T-cell (primary cell): ENCODE measurements at regions of chr12 and their contacts with region 1.

Region 1: GRCh38 chr12:6833189-6833890 is 5.1 kb downstream of the P3H3 start:
- DNase-seq: no peak
- ATAC-seq: no peak
- H3K4me3 ChIP-seq: no peak overlapping the region
- H3K4me3 Mint-ChIP-seq: no peak overlapping the region
- H3K27ac ChIP-seq: no peak overlapping the region
- H3K27ac Mint-ChIP-seq: peak overlapping the region in 1 of 2 donors; percentile 16
- H3K4me1 ChIP-seq: peaks cover 0 to 17% of the 10 kb centered on the region in 2 experiments
- H3K4me1 Mint-ChIP-seq: peaks cover 9 to 16% (median 14%) of the 10 kb centered on the region in 3 donors
- H3K27me3 ChIP-seq: peaks cover 0 to 30% of the 10 kb centered on the region in 2 experiments
- H3K27me3 Mint-ChIP-seq: peaks cover 0 to 22% of the 10 kb centered on the region in 2 donors

Region 2: GRCh38 chr12:6582196-6582595 is 251.1 kb before region 1 on chr12:
- CTCF ChIA-PET with region 1: interaction called in 1 of 2 experiments, 13 read pairs
- POLR2A ChIA-PET with region 1: no interaction called
- DNase-seq: no peak
- ATAC-seq: peak in 1 of 4 experiments; percentile 17
- H3K4me3 ChIP-seq: no peak overlapping the region
- H3K4me3 Mint-ChIP-seq: no peak overlapping the region
- H3K27ac ChIP-seq: no peak overlapping the region
- H3K27ac Mint-ChIP-seq: no peak overlapping the region
- H3K4me1 ChIP-seq: no peaks in the 10 kb centered on the region
- H3K4me1 Mint-ChIP-seq: no peaks in the 10 kb centered on the region
- H3K27me3 ChIP-seq: no peaks in the 10 kb centered on the region
- H3K27me3 Mint-ChIP-seq: no peaks in the 10 kb centered on the region

Region 3: GRCh38 chr12:6884539-6884938 is 51.2 kb after region 1 on chr12:
- CTCF ChIA-PET with region 1: no interaction called
- POLR2A ChIA-PET with region 1: no interaction called
- DNase-seq: no peak
- ATAC-seq: no peak
- H3K4me3 ChIP-seq: no peak overlapping the region
- H3K4me3 Mint-ChIP-seq: no peak overlapping the region
- H3K27ac ChIP-seq: no peak overlapping the region
- H3K27ac Mint-ChIP-seq: no peak overlapping the region
- H3K4me1 ChIP-seq: no peaks in the 10 kb centered on the region
- H3K4me1 Mint-ChIP-seq: no peaks in the 10 kb centered on the region
- H3K27me3 ChIP-seq: no peaks in the 10 kb centered on the region
- H3K27me3 Mint-ChIP-seq: no peaks in the 10 kb centered on the region

Region 4: DNA sequence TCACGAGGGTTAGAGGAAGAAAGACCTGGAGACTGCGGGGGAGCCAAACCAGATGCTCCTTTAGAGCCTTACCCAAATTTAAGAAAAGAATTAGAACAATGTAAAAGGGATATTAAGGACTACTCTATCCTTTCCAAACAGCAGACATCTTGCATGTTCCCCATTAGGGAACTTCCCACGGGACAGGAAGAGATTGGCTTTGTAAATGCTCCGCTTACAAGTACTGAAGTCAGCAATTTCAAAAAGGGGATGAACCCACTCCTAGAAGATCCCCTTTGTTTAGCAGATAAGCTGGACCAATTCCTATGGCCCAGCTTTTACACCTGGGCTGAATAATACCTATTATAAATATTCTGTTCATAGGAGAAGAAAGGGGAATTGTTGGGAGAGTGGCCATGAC is 758.2 kb after region 1 on chr12:
- CTCF ChIA-PET with region 1: no interaction called
- POLR2A ChIA-PET with region 1: no interaction called
- DNase-seq: no peak
- ATAC-seq: no peak
- H3K4me3 ChIP-seq: no peak overlapping the region
- H3K4me3 Mint-ChIP-seq: no peak overlapping the region
- H3K27ac ChIP-seq: no peak overlapping the region
- H3K27ac Mint-ChIP-seq: no peak overlapping the region
- H3K4me1 ChIP-seq: no peaks in the 10 kb centered on the region
- H3K4me1 Mint-ChIP-seq: peaks cover 0 to 6% (median 4%) of the 10 kb centered on the region in 3 donors
- H3K27me3 ChIP-seq: peaks cover 0 to 8% of the 10 kb centered on the region in 2 experiments
- H3K27me3 Mint-ChIP-seq: peaks cover 9 to 14% of the 10 kb centered on the region in 2 donors